Heart right ventricle (tissue), 16 donors: ENCODE measurements at regions of chr10 and their contacts with region 1.

Region 1: GRCh38 chr10:7397049-7398035 is 13.5 kb downstream of the SFMBT2 start:
- DNase-seq: peak in 1 of 2 donors; percentile 64
- ATAC-seq: peak; percentile 78 to 94 (median 89)
- H3K4me3 ChIP-seq: peak overlapping the region in 6 of 10 donors; percentile 12 to 31 (median 18)
- H3K27ac ChIP-seq: peak overlapping the region; percentile 7 to 87 (median 74)
- H3K4me1 ChIP-seq: peaks cover 2 to 53% (median 46%) of the 10 kb centered on the region in 9 donors
- H3K27me3 ChIP-seq: no peaks in the 10 kb centered on the region
- CTCF ChIP-seq: peak in 1 of 9 donors; percentile 12

Region 2: DNA sequence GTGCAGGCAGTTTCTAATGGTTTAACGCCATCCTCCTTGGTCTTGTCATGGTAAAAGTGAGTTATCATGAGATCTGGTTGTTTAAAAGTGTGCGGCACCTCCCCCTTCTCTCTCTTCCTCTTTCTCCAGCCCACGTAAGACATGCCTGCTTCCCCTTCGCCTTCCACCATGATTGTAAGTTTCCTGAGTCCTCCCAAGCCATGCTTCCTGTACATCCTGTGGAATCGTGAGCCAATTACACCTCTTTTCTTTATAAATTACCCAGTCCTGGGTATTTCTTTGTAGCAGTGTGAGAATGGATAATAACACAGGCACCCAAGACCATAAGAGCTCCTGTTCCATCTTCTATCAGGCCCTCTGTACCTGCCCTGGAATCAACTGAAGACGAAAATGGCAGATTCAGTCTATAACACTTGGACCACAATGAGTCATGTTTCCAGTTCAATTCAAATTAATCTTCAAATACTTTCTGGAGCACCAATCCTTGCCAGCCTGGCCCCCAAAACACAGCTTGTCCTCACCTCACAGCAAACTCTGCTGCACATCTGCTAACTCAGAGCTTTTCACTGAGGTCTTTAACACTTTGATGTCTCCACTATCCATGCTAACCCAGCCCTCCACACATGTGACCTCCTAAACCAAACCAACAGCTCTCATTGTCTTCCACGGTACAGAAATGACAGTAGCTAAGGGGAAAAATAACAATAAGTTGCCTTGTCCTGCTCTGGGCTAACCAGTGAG is 59.7 kb before region 1 on chr10:
- intact Hi-C with region 1: loop called in 3 of 10 experiments (anchors 2 to 10 kb)
- DNase-seq: no peak
- ATAC-seq: peak in 2 of 8 donors; percentile 18 to 38
- H3K4me3 ChIP-seq: no peak overlapping the region
- H3K27ac ChIP-seq: peak overlapping the region in 6 of 10 donors; percentile 3 to 57 (median 32)
- H3K4me1 ChIP-seq: peaks cover 4 to 71% (median 47%) of the 10 kb centered on the region in 9 donors
- H3K27me3 ChIP-seq: no peaks in the 10 kb centered on the region
- CTCF ChIP-seq: no peak

Region 3: DNA sequence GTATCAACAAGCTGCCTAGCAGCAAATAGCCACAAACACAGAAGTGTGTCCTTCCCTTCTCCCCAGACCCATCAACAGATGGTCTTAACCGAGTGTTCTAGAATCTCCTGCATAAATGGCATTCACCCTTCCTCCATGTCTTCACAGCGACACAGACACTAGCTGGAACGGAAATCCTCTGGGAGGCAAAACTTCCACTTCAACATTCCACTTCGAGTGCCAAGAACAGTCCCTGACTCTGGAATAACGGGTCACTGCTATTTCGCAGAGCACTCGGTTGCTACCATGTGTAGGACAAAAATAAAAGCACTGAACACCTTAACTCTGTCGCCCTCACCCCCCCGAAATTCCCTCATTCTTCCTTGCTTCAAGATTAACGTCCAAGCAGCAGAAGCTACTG is 51.6 kb before region 1 on chr10:
- intact Hi-C with region 1: loop called in 4 of 10 experiments (anchors 2 to 10 kb)
- DNase-seq: peak in 1 of 2 donors; percentile 40
- ATAC-seq: peak; percentile 74 to 96 (median 87)
- H3K4me3 ChIP-seq: peak overlapping the region in 2 of 10 donors; percentile 5 to 6
- H3K27ac ChIP-seq: peak overlapping the region; percentile 30 to 83 (median 60)
- H3K4me1 ChIP-seq: peaks cover 4 to 31% (median 22%) of the 10 kb centered on the region in 9 donors
- H3K27me3 ChIP-seq: no peaks in the 10 kb centered on the region
- CTCF ChIP-seq: no peak